PC-3 (cell line): ENCODE measurements at regions of chr4 and their contacts with region 1.

Region 1: DNA sequence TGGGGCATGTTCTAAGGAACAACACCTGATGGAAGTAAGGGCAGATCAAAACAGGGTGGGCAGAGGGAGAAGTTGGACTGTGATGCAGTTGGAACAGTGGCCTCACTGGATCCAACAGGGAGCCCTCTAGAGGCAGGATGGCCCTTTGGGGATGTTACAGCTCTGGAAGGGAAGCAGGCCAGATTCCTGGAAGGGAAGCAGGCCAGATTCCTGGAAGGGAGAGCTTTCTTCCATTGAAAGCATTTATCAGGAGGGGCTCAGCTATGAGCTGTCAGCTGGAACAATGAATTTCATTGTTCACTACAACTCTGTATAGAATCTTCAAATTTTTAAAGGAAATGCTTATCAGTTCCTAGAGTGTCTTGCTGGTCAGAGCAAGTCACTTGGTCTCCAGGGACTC is 17.7 kb downstream of the IL15 start:
- DNase-seq: peak; percentile 65
- ATAC-seq: peak; percentile 65
- H3K4me3 ChIP-seq: no peak overlapping the region
- H3K27ac ChIP-seq: no peak overlapping the region
- H3K4me1 ChIP-seq: no peaks in the 10 kb centered on the region; the same call in 1 of the 2 replicates
- H3K27me3 ChIP-seq: no peaks in the 10 kb centered on the region
- CTCF ChIP-seq: peak; percentile 84

Region 2: GRCh38 chr4:141692081-141692480 is 38.0 kb after region 1 on chr4:
- CTCF ChIA-PET with region 1: no interaction called
- POLR2A ChIA-PET with region 1: no interaction called
- intact Hi-C with region 1: loop called (anchors 1 kb)
- DNase-seq: no peak
- ATAC-seq: no peak
- H3K4me3 ChIP-seq: no peak overlapping the region
- H3K27ac ChIP-seq: no peak overlapping the region
- H3K4me1 ChIP-seq: peaks cover 9% of the 10 kb centered on the region
- H3K27me3 ChIP-seq: no peaks in the 10 kb centered on the region
- CTCF ChIP-seq: no peak

Region 3: DNA sequence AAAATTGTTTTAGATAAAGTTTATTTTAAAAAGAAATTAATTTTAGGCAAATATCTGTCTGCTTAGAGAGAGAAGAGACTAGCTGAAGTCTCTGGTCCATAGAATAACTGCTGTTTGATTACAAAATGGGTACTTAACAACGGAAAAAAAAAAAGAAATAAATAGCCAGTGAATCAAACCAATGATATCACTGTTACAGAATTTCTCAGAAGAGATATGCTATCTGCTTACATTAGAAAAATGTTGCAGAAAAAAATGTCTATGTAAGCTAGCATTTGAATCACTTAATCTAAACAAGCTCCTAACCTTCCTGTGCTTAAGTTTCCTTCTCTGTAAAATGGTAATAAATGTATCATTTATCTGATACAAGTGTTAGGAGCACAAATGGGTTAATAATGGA is 172.2 kb after region 1 on chr4:
- CTCF ChIA-PET with region 1: no interaction called
- POLR2A ChIA-PET with region 1: no interaction called
- intact Hi-C with region 1: no loop called
- DNase-seq: no peak
- ATAC-seq: no peak
- H3K4me3 ChIP-seq: no peak overlapping the region
- H3K27ac ChIP-seq: no peak overlapping the region
- H3K4me1 ChIP-seq: no peaks in the 10 kb centered on the region
- H3K27me3 ChIP-seq: no peaks in the 10 kb centered on the region
- CTCF ChIP-seq: no peak

Region 4: GRCh38 chr4:142021181-142021580 is 367.1 kb after region 1 on chr4:
- CTCF ChIA-PET with region 1: no interaction called
- POLR2A ChIA-PET with region 1: no interaction called
- intact Hi-C with region 1: no loop called
- DNase-seq: no peak
- ATAC-seq: no peak
- H3K4me3 ChIP-seq: no peak overlapping the region
- H3K27ac ChIP-seq: no peak overlapping the region
- H3K4me1 ChIP-seq: no peaks in the 10 kb centered on the region
- H3K27me3 ChIP-seq: no peaks in the 10 kb centered on the region
- CTCF ChIP-seq: no peak

Region 5: DNA sequence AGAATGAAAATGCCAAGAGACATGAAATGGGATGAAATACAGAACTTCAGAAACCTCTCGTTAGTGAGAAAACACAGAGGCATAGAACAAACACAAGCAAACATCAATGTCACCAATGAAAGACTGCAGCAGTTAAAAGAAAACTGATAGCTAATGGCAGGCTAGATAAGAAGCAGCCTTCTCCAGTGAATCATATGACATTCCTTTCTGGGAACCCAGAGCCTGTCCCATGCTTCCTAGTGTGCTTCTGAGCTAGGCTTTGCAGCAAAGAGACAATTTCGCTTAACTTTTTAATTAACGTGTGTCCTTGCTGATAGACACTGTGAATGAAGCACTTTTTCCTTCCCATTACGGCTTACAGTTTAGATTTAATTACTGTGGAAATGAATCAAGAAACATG is 426.9 kb after region 1 on chr4:
- CTCF ChIA-PET with region 1: no interaction called
- POLR2A ChIA-PET with region 1: no interaction called
- intact Hi-C with region 1: no loop called
- DNase-seq: no peak
- ATAC-seq: no peak
- H3K4me3 ChIP-seq: no peak overlapping the region
- H3K27ac ChIP-seq: no peak overlapping the region
- H3K4me1 ChIP-seq: 0 out of 2 replicates have a peak, but pooled peaks cover 5% of the 10 kb centered on the region
- H3K27me3 ChIP-seq: no peaks in the 10 kb centered on the region
- CTCF ChIP-seq: no peak